ENCODE measurements at regions of chr9 and their contacts with region 1.

Region 1: DNA sequence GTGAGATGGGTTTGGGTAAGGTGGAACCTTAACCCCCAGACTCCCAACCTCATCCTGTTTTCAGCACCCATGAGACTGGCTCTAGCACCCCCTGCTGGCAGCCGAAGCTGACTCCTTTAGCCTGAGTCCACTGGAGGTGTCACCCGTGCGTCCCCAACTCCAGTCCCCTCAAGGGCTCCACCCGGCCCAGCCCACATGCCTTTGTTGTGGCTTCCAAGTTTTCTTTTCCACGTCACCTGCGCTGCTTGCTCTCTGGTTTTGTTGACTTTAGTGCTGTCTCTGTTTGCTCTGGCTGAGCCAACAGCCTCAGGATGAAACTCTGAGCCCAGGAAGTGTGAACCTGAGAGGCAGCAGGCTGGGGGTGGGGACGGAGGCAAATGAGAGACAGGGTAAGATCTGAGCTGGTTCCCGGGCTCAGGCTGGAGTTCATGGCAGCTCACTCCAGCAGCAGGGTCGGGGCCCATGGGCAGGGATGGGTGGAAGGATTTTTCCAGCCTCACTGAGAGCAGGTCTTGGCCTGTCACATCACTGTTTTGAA is 13.2 kb upstream of the AQP7 start:
- DNase-seq: peak; percentile 82 to 94 (median 89)
- H3K4me3 ChIP-seq: peak overlapping the region; percentile 26
- H3K4me3 Mint-ChIP-seq: peak overlapping the region; percentile 36 to 84 (median 66)
- H3K27ac ChIP-seq: no peak overlapping the region
- H3K27ac Mint-ChIP-seq: peak overlapping the region; percentile 79 to 98 (median 95)
- H3K4me1 ChIP-seq: peaks cover 41% of the 10 kb centered on the region
- H3K4me1 Mint-ChIP-seq: peaks cover 42 to 54% (median 53%) of the 10 kb centered on the region in 3 donors
- H3K27me3 ChIP-seq: no peaks in the 10 kb centered on the region
- H3K27me3 Mint-ChIP-seq: no peaks in the 10 kb centered on the region

Region 2: DNA sequence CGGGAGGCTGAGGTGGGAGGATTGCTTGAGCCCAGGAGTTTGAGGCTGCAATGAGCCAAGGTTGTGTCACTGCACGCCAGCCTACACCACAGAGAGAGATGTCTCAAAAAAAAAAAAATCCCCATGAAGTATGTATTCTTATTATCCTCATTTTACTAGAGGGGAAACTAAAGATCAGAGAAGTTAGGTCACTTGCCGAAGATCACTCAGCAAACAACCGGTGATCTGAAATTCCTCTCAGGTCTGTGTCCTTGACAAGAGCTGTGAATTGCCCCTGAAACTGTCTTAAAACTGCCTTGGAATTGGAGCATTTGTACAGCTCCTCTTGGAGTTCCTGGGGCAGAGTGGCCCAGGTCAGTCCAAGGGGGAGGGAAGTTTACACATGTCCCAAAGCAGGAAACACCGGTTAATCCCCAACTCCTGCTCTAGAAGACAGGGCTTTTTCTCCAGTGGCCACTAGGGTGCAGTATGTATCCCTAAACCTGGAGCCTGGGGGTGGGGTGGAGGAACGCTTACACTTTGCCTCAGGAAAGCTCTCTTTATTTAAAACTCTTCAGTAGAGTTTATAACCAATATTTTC is 40.8 kb before region 1 on chr9:
- CTCF ChIA-PET with region 1: interaction called, 17 read pairs
- POLR2A ChIA-PET with region 1: no interaction called
- DNase-seq: peak; percentile 32 to 72 (median 45)
- H3K4me3 ChIP-seq: no peak overlapping the region
- H3K4me3 Mint-ChIP-seq: no peak overlapping the region
- H3K27ac ChIP-seq: no peak overlapping the region
- H3K27ac Mint-ChIP-seq: peak overlapping the region in 2 of 8 donors; percentile 39 to 79
- H3K4me1 ChIP-seq: no peaks in the 10 kb centered on the region
- H3K4me1 Mint-ChIP-seq: peaks cover 5 to 7% (median 7%) of the 10 kb centered on the region in 3 donors
- H3K27me3 ChIP-seq: no peaks in the 10 kb centered on the region
- H3K27me3 Mint-ChIP-seq: peaks cover 0 to 2% of the 10 kb centered on the region in 2 donors

Region 3: GRCh38 chr9:33436440-33436839 is 20.9 kb after region 1 on chr9:
- CTCF ChIA-PET with region 1: interaction called, 27 read pairs
- POLR2A ChIA-PET with region 1: no interaction called
- DNase-seq: no peak
- H3K4me3 ChIP-seq: no peak overlapping the region
- H3K4me3 Mint-ChIP-seq: no peak overlapping the region
- H3K27ac ChIP-seq: no peak overlapping the region
- H3K27ac Mint-ChIP-seq: peak overlapping the region in 1 of 8 donors; percentile 56
- H3K4me1 ChIP-seq: no peaks in the 10 kb centered on the region
- H3K4me1 Mint-ChIP-seq: peaks cover 4 to 12% (median 6%) of the 10 kb centered on the region in 3 donors
- H3K27me3 ChIP-seq: no peaks in the 10 kb centered on the region
- H3K27me3 Mint-ChIP-seq: peaks cover 0 to 2% of the 10 kb centered on the region in 2 donors

Region 4: GRCh38 chr9:33452828-33453271 is 37.3 kb after region 1 on chr9:
- CTCF ChIA-PET with region 1: interaction called, 102 read pairs
- POLR2A ChIA-PET with region 1: interaction called, 13 read pairs
- DNase-seq: peak; percentile 20 to 64 (median 39)
- H3K4me3 ChIP-seq: no peak overlapping the region
- H3K4me3 Mint-ChIP-seq: peak overlapping the region in 5 of 7 donors; percentile 25 to 78 (median 50)
- H3K27ac ChIP-seq: no peak overlapping the region
- H3K27ac Mint-ChIP-seq: peak overlapping the region in 7 of 8 donors; percentile 54 to 95 (median 80)
- H3K4me1 ChIP-seq: peaks cover 52% of the 10 kb centered on the region
- H3K4me1 Mint-ChIP-seq: peaks cover 48 to 65% (median 51%) of the 10 kb centered on the region in 3 donors
- H3K27me3 ChIP-seq: no peaks in the 10 kb centered on the region
- H3K27me3 Mint-ChIP-seq: no peaks in the 10 kb centered on the region

Region 5: GRCh38 chr9:33466565-33467495 is 51.3 kb after region 1 on chr9:
- CTCF ChIA-PET with region 1: interaction called, 105 read pairs
- POLR2A ChIA-PET with region 1: interaction called, 3 read pairs
- DNase-seq: peak; percentile 57 to 78 (median 66)
- H3K4me3 ChIP-seq: no peak overlapping the region
- H3K4me3 Mint-ChIP-seq: peak overlapping the region in 1 of 7 donors; percentile 42
- H3K27ac ChIP-seq: no peak overlapping the region
- H3K27ac Mint-ChIP-seq: peak overlapping the region in 3 of 8 donors; percentile 12 to 68 (median 36)
- H3K4me1 ChIP-seq: peaks cover 3% of the 10 kb centered on the region
- H3K4me1 Mint-ChIP-seq: peaks cover 5 to 7% (median 6%) of the 10 kb centered on the region in 3 donors
- H3K27me3 ChIP-seq: no peaks in the 10 kb centered on the region
- H3K27me3 Mint-ChIP-seq: no peaks in the 10 kb centered on the region

Measured in CD8-positive, alpha-beta memory T cell (primary cell).